Activated CD4-positive, alpha-beta memory T cell treated with anti-CD3 and anti-CD28 coated beads for 36 hours (primary cell): ENCODE measurements at regions of chr6 and their contacts with region 1.

Region 1: DNA sequence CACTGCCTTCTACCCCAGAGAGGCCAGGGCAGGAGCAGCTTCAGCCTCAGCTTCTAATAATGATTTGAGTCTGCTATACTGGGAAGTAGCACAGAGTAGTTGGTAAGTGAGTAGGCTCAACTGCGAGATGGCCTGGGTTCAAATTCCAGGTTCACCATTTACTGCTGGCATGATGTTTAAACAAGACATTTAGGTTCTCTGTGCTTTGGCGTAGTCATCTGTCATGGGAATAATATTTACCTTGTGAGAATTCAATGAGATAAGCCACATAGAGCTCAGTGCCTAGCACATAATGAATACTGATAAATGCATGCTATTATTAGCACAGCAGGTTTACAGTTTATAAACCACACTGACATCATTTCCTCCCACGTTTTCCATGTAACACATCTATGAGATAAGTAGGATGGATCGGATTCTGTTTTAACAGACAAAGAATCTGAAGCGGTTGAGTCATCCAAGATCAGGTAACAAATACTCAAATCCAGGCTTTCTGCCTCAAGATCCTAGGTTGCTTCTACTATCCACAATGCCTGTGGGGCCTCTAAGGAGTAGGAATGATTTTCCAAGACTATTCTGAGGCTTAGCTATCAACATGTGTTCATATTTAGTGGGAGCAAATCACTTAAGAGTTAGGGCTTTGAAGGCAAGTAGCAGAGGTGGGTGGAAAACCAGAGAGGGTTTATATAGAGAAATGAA is 72.9 kb upstream of the DTNBP1 start:
- DNase-seq: peak; percentile 30
- H3K4me3 Mint-ChIP-seq: no peak overlapping the region
- H3K27ac Mint-ChIP-seq: peak overlapping the region; percentile 82
- H3K4me1 Mint-ChIP-seq: peaks cover 49% of the 10 kb centered on the region
- H3K27me3 Mint-ChIP-seq: peaks cover 8% of the 10 kb centered on the region

Region 2: DNA sequence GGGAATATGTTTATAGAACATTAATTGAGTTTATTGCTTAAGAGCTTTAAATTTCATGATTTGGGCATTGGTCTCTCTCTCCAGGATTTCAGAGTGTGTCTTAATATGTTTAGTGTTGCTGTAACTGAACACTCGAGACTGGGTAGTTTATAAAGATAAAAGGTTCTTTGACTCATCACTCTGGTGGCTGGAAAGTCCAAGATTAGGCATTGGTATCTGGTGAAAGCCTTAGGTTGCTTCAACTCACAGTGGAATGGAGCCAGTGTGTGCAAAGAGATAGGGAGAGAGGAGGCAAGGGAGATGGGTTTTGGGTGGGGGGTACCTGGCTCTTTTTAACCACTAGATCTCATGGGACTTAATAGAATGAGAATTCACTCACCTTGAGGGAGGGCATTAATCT is 37.2 kb before region 1 on chr6:
- CTCF ChIA-PET with region 1: no interaction called
- POLR2A ChIA-PET with region 1: no interaction called
- intact Hi-C with region 1: no loop called
- DNase-seq: no peak
- H3K4me3 Mint-ChIP-seq: no peak overlapping the region
- H3K27ac Mint-ChIP-seq: no peak overlapping the region
- H3K4me1 Mint-ChIP-seq: no peaks in the 10 kb centered on the region
- H3K27me3 Mint-ChIP-seq: peaks cover 18% of the 10 kb centered on the region

Region 3: GRCh38 chr6:15715060-15715459 is 20.7 kb before region 1 on chr6:
- CTCF ChIA-PET with region 1: no interaction called
- POLR2A ChIA-PET with region 1: no interaction called
- intact Hi-C with region 1: loop called (anchors 1 kb)
- DNase-seq: peak; percentile 70
- H3K4me3 Mint-ChIP-seq: no peak overlapping the region
- H3K27ac Mint-ChIP-seq: peak overlapping the region; percentile 54
- H3K4me1 Mint-ChIP-seq: peaks cover 21% of the 10 kb centered on the region
- H3K27me3 Mint-ChIP-seq: peaks cover 14% of the 10 kb centered on the region

Region 4: DNA sequence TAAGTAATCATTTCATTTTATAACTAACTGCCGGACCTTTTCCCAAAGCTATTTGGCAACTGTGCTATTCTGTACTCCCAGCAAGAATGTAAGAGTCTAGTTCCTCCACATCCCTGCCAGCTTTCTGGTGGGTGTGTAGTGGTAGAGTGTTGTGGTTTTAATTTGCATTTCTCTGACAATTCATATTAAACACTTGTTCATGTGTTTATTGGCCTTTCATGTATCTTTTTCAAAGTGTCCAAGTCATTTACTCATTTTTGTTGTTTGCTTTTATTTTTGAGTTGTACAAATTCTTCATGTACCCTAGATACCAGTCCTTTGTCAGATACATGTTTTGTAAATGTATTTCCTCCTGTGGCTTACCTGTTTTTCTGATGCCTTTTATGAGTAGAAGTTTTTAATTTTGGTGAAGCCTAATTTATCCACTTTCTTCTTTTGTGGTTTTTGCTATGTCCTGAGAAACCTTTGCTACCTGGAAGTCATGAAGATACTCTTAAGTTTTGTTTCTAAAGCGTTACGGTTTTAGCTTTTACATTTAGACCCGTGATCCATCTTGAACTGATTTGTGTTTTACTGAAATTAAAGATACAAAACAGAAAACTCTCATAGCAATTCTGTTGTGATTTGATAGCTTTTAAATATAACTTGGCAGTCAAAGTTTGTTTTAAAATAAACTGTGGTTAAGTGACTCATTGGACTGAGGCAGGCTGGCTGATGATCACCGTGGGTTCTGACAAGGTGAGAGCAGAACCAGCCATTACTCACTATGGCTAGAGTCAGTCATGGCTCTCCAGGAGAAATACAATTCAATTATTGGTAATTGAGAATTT is 401.1 kb after region 1 on chr6:
- CTCF ChIA-PET with region 1: no interaction called
- POLR2A ChIA-PET with region 1: no interaction called
- intact Hi-C with region 1: loop called (anchors 5 kb)
- DNase-seq: peak; percentile 75
- H3K4me3 Mint-ChIP-seq: peak overlapping the region; percentile 46
- H3K27ac Mint-ChIP-seq: peak overlapping the region; percentile 86
- H3K4me1 Mint-ChIP-seq: peaks cover 76% of the 10 kb centered on the region
- H3K27me3 Mint-ChIP-seq: no peaks in the 10 kb centered on the region